CD4-positive, alpha-beta memory T cell (primary cell): ENCODE measurements at regions of chr17 and their contacts with region 1.

Region 1: DNA sequence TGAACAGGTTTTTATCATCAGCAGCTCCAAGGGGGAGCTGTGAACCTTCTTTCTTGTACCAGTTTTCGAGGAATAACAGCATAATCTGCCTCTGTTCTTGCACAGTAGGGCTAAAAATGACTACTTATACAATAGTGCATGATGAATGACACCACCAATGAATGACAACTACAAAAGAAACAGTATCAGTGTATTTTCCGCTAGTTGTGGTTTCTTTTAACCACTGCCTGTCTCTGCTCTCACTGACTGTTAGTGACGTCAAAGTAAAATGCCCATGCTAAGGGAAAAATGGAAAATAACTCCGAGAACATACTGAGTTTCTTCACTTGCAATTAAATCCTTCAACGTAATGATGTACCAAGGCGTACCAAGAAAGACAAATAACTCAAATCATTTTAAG is 294.9 kb downstream of the MAP2K6 start:
- DNase-seq: no peak
- H3K4me3 ChIP-seq: no peak overlapping the region
- H3K4me3 Mint-ChIP-seq: no peak overlapping the region
- H3K27ac ChIP-seq: no peak overlapping the region
- H3K27ac Mint-ChIP-seq: no peak overlapping the region
- H3K4me1 ChIP-seq: no peaks in the 10 kb centered on the region
- H3K4me1 Mint-ChIP-seq: peaks cover 0 to 2% (median 0%) of the 10 kb centered on the region in 4 donors
- H3K27me3 ChIP-seq: no peaks in the 10 kb centered on the region
- H3K27me3 Mint-ChIP-seq: peaks cover 0 to 2% of the 10 kb centered on the region in 2 donors

Region 2: GRCh38 chr17:68603027-68603426 is 1106.4 kb before region 1 on chr17:
- CTCF ChIA-PET with region 1: no interaction called
- POLR2A ChIA-PET with region 1: no interaction called
- intact Hi-C with region 1: no loop called
- DNase-seq: no peak
- H3K4me3 ChIP-seq: no peak overlapping the region
- H3K4me3 Mint-ChIP-seq: no peak overlapping the region
- H3K27ac ChIP-seq: no peak overlapping the region
- H3K27ac Mint-ChIP-seq: no peak overlapping the region
- H3K4me1 ChIP-seq: peaks cover 7% of the 10 kb centered on the region
- H3K4me1 Mint-ChIP-seq: peaks cover 2 to 16% (median 10%) of the 10 kb centered on the region in 4 donors
- H3K27me3 ChIP-seq: peaks cover 8% of the 10 kb centered on the region
- H3K27me3 Mint-ChIP-seq: peaks cover 45 to 51% of the 10 kb centered on the region in 2 donors

Region 3: GRCh38 chr17:69643686-69644085 is 65.8 kb before region 1 on chr17:
- CTCF ChIA-PET with region 1: no interaction called
- POLR2A ChIA-PET with region 1: no interaction called
- intact Hi-C with region 1: loop called (anchors 10 kb)
- DNase-seq: no peak
- H3K4me3 ChIP-seq: no peak overlapping the region
- H3K4me3 Mint-ChIP-seq: no peak overlapping the region
- H3K27ac ChIP-seq: no peak overlapping the region
- H3K27ac Mint-ChIP-seq: no peak overlapping the region
- H3K4me1 ChIP-seq: no peaks in the 10 kb centered on the region
- H3K4me1 Mint-ChIP-seq: no peaks in the 10 kb centered on the region
- H3K27me3 ChIP-seq: no peaks in the 10 kb centered on the region
- H3K27me3 Mint-ChIP-seq: no peaks in the 10 kb centered on the region